ENCODE measurements at regions of chr12 and their contacts with region 1.

Region 1: GRCh38 chr12:75058228-75058627 is 151.4 kb downstream of the KCNC2 start:
- DNase-seq: no peak
- H3K4me3 ChIP-seq: no peak overlapping the region
- H3K27ac ChIP-seq: no peak overlapping the region
- H3K4me1 ChIP-seq: no peaks in the 10 kb centered on the region
- H3K27me3 ChIP-seq: no peaks in the 10 kb centered on the region
- CTCF ChIP-seq: peak in 1 of 2 donors; percentile 12

Region 2: DNA sequence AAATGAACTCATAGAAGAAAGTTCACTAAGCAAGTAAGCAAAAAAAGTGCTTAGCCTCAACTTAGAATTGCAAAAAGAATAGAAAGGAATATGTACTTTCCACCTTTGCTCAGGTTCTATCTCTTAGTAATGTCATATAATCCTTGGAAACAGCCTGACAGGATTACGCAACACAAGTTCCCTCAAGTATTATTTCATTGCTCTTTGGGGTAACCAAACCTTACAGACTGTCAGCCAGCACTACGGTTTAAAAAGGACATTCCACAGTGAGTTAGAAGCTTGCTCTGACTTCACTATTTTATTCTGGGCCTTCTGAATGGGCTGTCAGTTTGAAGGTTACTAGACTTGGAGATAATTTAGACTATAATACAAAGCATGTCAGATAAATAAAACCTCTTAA is 256.6 kb before region 1 on chr12:
- CTCF ChIA-PET with region 1: no interaction called
- dilution Hi-C with region 1: no loop called
- in situ Hi-C with region 1: no loop called
- intact Hi-C with region 1: loop called (anchors 10 kb)
- DNase-seq: no peak
- H3K4me3 ChIP-seq: no peak overlapping the region
- H3K27ac ChIP-seq: no peak overlapping the region
- H3K4me1 ChIP-seq: no peaks in the 10 kb centered on the region
- H3K27me3 ChIP-seq: no peaks in the 10 kb centered on the region
- CTCF ChIP-seq: no peak

Region 3: GRCh38 chr12:74816398-74817168 is 241.6 kb before region 1 on chr12:
- CTCF ChIA-PET with region 1: no interaction called
- dilution Hi-C with region 1: no loop called
- in situ Hi-C with region 1: no loop called
- intact Hi-C with region 1: no loop called
- DNase-seq: no peak
- H3K4me3 ChIP-seq: no peak overlapping the region
- H3K27ac ChIP-seq: no peak overlapping the region
- H3K4me1 ChIP-seq: no peaks in the 10 kb centered on the region
- H3K27me3 ChIP-seq: peaks cover 2% of the 10 kb centered on the region
- CTCF ChIP-seq: no peak

Region 4: GRCh38 chr12:75446857-75447256 is 388.6 kb after region 1 on chr12:
- CTCF ChIA-PET with region 1: no interaction called
- dilution Hi-C with region 1: no loop called
- in situ Hi-C with region 1: no loop called
- intact Hi-C with region 1: no loop called
- DNase-seq: peak; percentile 73
- H3K4me3 ChIP-seq: no peak overlapping the region
- H3K27ac ChIP-seq: no peak overlapping the region
- H3K4me1 ChIP-seq: peaks cover 34% of the 10 kb centered on the region
- H3K27me3 ChIP-seq: no peaks in the 10 kb centered on the region
- CTCF ChIP-seq: no peak

Measured in mammary epithelial cell (primary cell).